CD8-positive, alpha-beta T cell (primary cell): ENCODE measurements at regions of chr14 and their contacts with region 1.

Region 1: GRCh38 chr14:81269100-81269978 is 48.6 kb upstream of the GTF2A1 start:
- DNase-seq: peak in 3 of 9 experiments; percentile 7 to 60 (median 52)
- ATAC-seq: peak; percentile 52
- H3K4me3 ChIP-seq: no peak overlapping the region
- H3K4me3 Mint-ChIP-seq: no peak overlapping the region
- H3K27ac ChIP-seq: no peak overlapping the region
- H3K27ac Mint-ChIP-seq: no peak overlapping the region
- H3K4me1 ChIP-seq: no peaks in the 10 kb centered on the region
- H3K4me1 Mint-ChIP-seq: peaks cover 2% of the 10 kb centered on the region
- H3K27me3 ChIP-seq: no peaks in the 10 kb centered on the region
- H3K27me3 Mint-ChIP-seq: peaks cover 17% of the 10 kb centered on the region
- CTCF ChIP-seq: peak; percentile 63

Region 2: DNA sequence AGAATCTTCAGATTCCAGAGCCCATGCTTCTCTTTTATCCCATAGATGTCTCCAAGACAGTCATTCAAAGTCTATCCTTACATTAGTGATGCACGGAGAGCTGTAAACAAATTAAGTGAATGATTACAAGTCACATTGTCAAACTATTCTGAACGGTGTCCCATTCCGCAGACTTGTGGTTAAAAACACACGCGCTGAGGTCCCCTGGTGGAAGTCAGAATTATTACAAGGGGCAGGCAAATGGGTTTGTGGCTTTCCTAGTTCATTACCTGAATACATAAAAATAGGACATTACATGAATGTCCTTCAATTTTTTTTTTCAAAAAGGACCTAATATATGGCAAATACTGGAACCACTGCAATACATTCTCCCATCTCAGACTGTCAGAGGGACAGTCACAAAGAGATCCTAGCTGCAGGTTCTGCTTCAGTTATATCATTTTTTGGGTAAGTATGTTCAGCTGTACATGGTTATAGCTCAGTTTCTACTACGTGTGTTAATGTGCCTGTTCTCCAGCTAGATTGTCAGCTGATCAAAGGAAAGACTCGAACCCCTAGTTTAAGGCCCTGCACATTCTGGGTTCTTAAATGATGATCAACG is 183.9 kb after region 1 on chr14:
- CTCF ChIA-PET with region 1: interaction called, 53 read pairs
- POLR2A ChIA-PET with region 1: interaction called, 3 read pairs
- intact Hi-C with region 1: loop called (anchors 1 to 2 kb)
- DNase-seq: peak in 7 of 9 experiments; percentile 36 to 69 (median 58)
- ATAC-seq: peak; percentile 86
- H3K4me3 ChIP-seq: no peak overlapping the region
- H3K4me3 Mint-ChIP-seq: no peak overlapping the region
- H3K27ac ChIP-seq: no peak overlapping the region
- H3K27ac Mint-ChIP-seq: no peak overlapping the region
- H3K4me1 ChIP-seq: no peaks in the 10 kb centered on the region
- H3K4me1 Mint-ChIP-seq: peaks cover 3% of the 10 kb centered on the region
- H3K27me3 ChIP-seq: no peaks in the 10 kb centered on the region
- H3K27me3 Mint-ChIP-seq: peaks cover 4% of the 10 kb centered on the region
- CTCF ChIP-seq: peak; percentile 89